IMR-90 (cell line): ENCODE measurements at regions of chr14 and their contacts with region 1.

Region 1: DNA sequence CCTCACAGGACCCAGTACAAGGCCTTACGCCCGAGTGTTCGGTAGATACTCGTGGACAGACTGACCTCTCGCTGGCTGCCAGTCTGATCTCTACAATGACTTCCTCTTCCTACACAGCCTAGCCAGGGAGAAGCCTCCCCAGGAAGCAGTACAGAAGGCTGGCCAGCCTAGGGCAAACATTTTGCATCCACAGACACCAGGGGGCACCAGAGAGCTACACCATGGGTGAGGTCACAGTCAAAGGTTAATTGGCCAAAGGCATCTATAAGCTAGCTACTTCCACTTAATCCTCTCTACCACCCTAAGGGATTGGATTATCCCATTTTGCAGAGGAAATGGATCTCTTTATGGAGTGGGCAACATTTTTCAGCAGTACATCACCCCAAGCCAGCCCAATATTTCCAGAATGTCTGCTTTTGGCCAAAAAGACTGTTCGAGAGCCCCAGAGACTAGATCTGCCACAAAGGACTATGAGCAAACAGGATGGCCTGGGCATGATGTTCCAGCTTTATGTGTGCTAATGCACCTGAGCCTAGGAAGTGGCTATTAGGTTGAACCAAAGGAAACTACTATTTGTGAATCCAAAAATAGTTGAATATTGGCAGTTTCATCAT is 14.6 kb upstream of the PNMA1 start:
- DNase-seq: peak; percentile 63
- ATAC-seq: peak; percentile 45
- H3K4me3 ChIP-seq: no peak overlapping the region
- H3K27ac ChIP-seq: peak overlapping the region; percentile 35; the same call in 1 of the 2 replicates
- H3K4me1 ChIP-seq: peaks cover 29% of the 10 kb centered on the region
- H3K27me3 ChIP-seq: no peaks in the 10 kb centered on the region
- CTCF ChIP-seq: peak; percentile 84
- POLR2A ChIP-seq: no peak
- RAD21 ChIP-seq: peak; percentile 82

Region 2: GRCh38 chr14:73741386-73741875 is 12.6 kb after region 1 on chr14:
- CTCF ChIA-PET with region 1: interaction called, 12 read pairs
- POLR2A ChIA-PET with region 1: no interaction called
- dilution Hi-C with region 1: no loop called
- in situ Hi-C with region 1: no loop called
- intact Hi-C with region 1: no loop called
- DNase-seq: peak; percentile 66
- ATAC-seq: peak; percentile 74
- H3K4me3 ChIP-seq: peak overlapping the region; percentile 13; the same call in 1 of the 2 replicates
- H3K27ac ChIP-seq: peak overlapping the region; percentile 87
- H3K4me1 ChIP-seq: peaks cover 58% of the 10 kb centered on the region
- H3K27me3 ChIP-seq: no peaks in the 10 kb centered on the region
- CTCF ChIP-seq: 0 out of 2 replicates have a peak, but pooled peaks have one; percentile 9
- POLR2A ChIP-seq: no peak
- RAD21 ChIP-seq: no peak; the same call in 1 of the 2 replicates

Region 3: DNA sequence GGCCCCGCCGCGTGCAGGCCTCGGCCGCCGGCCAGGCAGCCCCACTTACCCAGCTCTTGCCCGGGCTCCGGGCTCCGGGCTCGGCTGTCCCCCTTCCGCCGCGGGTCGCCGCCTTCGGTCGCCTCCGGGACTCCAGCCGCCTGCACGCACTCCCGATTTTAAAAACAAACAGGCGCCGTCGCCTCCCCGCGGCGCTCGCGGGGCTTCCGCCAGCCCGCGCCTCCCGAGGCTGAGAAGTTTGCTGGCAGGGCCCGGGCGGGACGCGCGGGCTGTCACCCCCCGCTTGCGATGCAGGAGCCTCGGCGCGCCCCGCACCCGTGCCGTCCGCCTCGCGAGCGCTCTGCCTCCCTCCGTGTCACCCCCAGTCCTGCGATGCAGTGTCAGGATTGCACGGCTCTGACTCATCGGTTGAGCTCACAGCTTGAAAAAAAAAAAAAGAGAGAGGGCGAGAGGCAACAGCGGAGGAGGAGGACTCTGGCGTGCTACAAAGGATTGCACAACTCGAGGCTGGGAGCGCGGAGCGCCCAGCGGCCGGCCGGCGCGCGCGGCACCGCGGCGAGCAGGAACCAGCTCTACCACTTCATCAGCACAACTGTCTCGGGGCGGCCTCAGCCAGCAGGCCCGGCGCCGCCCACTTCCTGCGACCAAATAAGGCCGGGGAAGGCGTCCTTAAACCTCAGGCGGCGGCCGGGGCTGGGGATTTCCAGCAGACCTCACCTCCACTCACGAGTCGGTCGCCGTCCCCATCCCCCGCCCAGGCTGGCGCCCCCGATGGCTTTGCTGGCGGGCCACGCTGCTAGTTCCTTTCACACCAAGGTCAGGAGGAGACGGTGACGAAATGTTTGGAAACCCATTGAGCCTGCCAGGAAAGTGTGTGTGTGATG is 31.1 kb after region 1 on chr14:
- CTCF ChIA-PET with region 1: interaction called, 9 read pairs
- POLR2A ChIA-PET with region 1: no interaction called
- dilution Hi-C with region 1: no loop called
- in situ Hi-C with region 1: no loop called
- intact Hi-C with region 1: loop called (anchors 5 kb)
- DNase-seq: peak; percentile 99
- ATAC-seq: peak; percentile 85
- H3K4me3 ChIP-seq: peak overlapping the region; percentile 89
- H3K27ac ChIP-seq: peak overlapping the region; percentile 80
- H3K4me1 ChIP-seq: peaks cover 45% of the 10 kb centered on the region
- H3K27me3 ChIP-seq: no peaks in the 10 kb centered on the region
- CTCF ChIP-seq: no peak
- POLR2A ChIP-seq: peak; percentile 87
- RAD21 ChIP-seq: peak; percentile 35

Region 4: GRCh38 chr14:73825551-73826188 is 96.8 kb after region 1 on chr14:
- CTCF ChIA-PET with region 1: interaction called, 7 read pairs
- POLR2A ChIA-PET with region 1: no interaction called
- dilution Hi-C with region 1: no loop called
- in situ Hi-C with region 1: no loop called
- intact Hi-C with region 1: loop called (anchors 2 kb)
- DNase-seq: peak; percentile 78
- ATAC-seq: peak; percentile 98
- H3K4me3 ChIP-seq: no peak overlapping the region
- H3K27ac ChIP-seq: no peak overlapping the region
- H3K4me1 ChIP-seq: no peaks in the 10 kb centered on the region
- H3K27me3 ChIP-seq: no peaks in the 10 kb centered on the region; the same call in 1 of the 2 replicates
- CTCF ChIP-seq: peak; percentile 88
- POLR2A ChIP-seq: no peak
- RAD21 ChIP-seq: peak; percentile 89

Region 5: GRCh38 chr14:73862480-73862879 is 133.7 kb after region 1 on chr14:
- CTCF ChIA-PET with region 1: no interaction called
- POLR2A ChIA-PET with region 1: no interaction called
- dilution Hi-C with region 1: no loop called
- in situ Hi-C with region 1: no loop called
- intact Hi-C with region 1: loop called (anchors 10 kb)
- DNase-seq: no peak
- ATAC-seq: no peak
- H3K4me3 ChIP-seq: no peak overlapping the region
- H3K27ac ChIP-seq: no peak overlapping the region
- H3K4me1 ChIP-seq: peaks cover 3% of the 10 kb centered on the region
- H3K27me3 ChIP-seq: no peaks in the 10 kb centered on the region
- CTCF ChIP-seq: no peak
- POLR2A ChIP-seq: no peak
- RAD21 ChIP-seq: no peak

Region 6: GRCh38 chr14:74038015-74038859 is 309.4 kb after region 1 on chr14:
- CTCF ChIA-PET with region 1: no interaction called
- POLR2A ChIA-PET with region 1: no interaction called
- dilution Hi-C with region 1: no loop called
- in situ Hi-C with region 1: no loop called
- intact Hi-C with region 1: loop called (anchors 5 kb)
- DNase-seq: peak; percentile 64
- ATAC-seq: peak; percentile 69
- H3K4me3 ChIP-seq: no peak overlapping the region
- H3K27ac ChIP-seq: no peak overlapping the region
- H3K4me1 ChIP-seq: no peaks in the 10 kb centered on the region
- H3K27me3 ChIP-seq: no peaks in the 10 kb centered on the region
- CTCF ChIP-seq: peak; percentile 64
- POLR2A ChIP-seq: no peak
- RAD21 ChIP-seq: peak; percentile 62